ENCODE measurements at regions of chr11 and their contacts with region 1.

Region 1: DNA sequence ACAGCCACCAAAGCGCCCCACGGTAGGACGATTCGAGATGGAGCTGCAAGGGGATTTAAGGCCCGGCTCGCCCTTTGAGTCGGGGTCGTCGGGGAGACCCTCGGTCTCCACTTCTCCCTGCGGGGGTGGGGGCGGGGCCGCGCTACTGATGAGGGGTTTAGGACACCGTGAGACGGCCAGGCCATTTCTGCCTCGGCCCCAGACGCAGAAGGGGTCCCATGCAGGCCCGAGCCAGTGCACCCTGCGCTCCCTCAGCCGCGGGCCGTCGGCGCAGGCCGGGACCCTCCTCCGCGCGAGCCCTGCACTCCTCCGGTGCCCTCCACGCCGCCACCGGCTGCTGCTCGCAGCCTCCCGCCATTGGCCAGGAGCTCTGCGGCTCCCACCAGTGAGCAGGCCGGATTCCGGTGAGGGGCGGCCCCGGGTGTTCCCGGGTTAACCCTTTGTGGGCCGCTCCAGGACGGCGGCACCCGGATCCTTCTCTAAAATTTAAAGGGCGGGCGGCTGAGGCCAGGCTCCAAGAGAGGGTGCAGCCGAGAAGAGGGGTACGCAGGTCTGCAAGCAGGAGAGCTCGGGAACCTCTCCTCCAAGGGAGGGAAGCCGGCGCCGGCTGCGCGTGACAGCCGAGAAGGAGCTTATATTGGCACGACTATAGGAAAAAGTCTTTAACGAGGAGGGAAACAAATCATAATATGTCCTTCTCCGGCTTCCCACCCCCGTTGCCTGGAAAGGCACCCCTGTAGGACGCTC is 18.0 kb downstream of the CREB3L1 start:
- DNase-seq: peak; percentile 73
- H3K4me3 ChIP-seq: peak overlapping the region; percentile 44 to 46
- H3K27ac ChIP-seq: peak overlapping the region; percentile 62 to 67
- H3K4me1 ChIP-seq: peaks cover 25% of the 10 kb centered on the region
- H3K27me3 ChIP-seq: no peaks in the 10 kb centered on the region
- CTCF ChIP-seq: no peak
- POLR2A ChIP-seq: no peak

Region 2: DNA sequence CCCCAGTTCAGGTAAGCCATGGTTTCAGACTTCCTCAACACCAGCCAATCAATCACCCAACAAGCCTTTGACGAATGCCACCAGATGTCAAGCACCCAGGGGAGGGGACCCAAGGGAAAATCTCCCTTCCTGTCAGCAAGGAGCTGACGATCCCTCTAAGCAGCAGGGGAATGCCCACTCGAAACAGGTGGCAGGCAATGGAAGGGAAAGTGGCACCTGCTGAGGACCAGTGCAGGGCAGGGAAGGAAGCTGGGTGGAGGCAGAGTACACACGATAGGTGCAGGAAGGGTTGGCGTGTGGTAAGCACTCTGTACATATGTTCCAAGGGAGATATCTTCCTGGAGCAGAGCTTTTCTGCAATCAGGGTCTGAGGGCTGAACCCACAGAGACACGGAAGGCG is 29.7 kb before region 1 on chr11:
- intact Hi-C with region 1: no loop called
- DNase-seq: no peak
- H3K4me3 ChIP-seq: no peak overlapping the region
- H3K27ac ChIP-seq: no peak overlapping the region
- H3K4me1 ChIP-seq: peaks cover 8% of the 10 kb centered on the region
- H3K27me3 ChIP-seq: no peaks in the 10 kb centered on the region
- CTCF ChIP-seq: no peak
- POLR2A ChIP-seq: no peak

Region 3: GRCh38 chr11:46278387-46279125 is 16.9 kb before region 1 on chr11:
- intact Hi-C with region 1: loop called (anchors 2 kb)
- DNase-seq: peak; percentile 71
- H3K4me3 ChIP-seq: peak overlapping the region; percentile 67 to 82
- H3K27ac ChIP-seq: peak overlapping the region; percentile 80 to 85
- H3K4me1 ChIP-seq: peaks cover 37% of the 10 kb centered on the region
- H3K27me3 ChIP-seq: no peaks in the 10 kb centered on the region
- CTCF ChIP-seq: peak; percentile 56 to 81 (median 64)
- POLR2A ChIP-seq: no peak

Measured in prostate gland (tissue), 2 donors.